Posterior vena cava (tissue), 2 donors: ENCODE measurements at regions of chr3 and their contacts with region 1.

Region 1: DNA sequence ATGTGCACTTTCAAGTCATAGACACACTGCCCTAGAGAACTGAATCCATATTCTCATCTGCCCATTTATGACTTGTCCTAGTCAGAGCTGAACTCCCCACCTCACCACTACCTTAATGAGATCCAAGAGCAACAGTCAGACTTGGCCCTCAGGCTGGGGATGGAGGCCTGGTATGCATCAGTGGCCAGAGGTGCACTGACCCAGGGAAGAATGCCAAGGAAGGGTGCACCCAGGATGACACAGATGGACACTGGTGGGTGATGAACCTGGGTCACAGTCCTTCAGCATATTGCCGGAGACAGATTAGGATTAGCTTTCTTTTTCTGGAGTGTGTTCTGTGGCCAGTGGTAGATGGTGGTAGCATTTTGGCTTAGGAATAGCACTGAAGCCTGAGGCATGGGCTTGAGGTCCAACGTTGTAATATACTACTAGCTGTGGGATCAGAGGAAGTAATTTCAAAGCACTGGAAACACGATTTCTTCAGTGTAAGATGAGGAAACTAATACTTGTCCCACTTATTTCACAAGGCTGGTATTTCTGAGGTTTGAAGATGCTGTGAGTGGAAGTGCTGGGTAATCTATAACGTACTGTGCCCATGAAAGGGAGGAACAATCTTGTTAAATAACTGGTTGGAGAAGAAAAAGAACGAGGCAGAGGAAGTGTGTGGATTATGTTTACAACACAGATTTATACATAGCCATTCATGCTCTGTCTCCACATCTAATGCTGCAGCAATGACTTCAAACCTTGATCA is 265.0 kb downstream of the THRB start:
- DNase-seq: no peak

Region 2: GRCh38 chr3:23981955-23982354 is 247.7 kb before region 1 on chr3:
- intact Hi-C with region 1: loop called in 1 of 2 experiments (anchors 2 kb)
- DNase-seq: no peak

Region 3: DNA sequence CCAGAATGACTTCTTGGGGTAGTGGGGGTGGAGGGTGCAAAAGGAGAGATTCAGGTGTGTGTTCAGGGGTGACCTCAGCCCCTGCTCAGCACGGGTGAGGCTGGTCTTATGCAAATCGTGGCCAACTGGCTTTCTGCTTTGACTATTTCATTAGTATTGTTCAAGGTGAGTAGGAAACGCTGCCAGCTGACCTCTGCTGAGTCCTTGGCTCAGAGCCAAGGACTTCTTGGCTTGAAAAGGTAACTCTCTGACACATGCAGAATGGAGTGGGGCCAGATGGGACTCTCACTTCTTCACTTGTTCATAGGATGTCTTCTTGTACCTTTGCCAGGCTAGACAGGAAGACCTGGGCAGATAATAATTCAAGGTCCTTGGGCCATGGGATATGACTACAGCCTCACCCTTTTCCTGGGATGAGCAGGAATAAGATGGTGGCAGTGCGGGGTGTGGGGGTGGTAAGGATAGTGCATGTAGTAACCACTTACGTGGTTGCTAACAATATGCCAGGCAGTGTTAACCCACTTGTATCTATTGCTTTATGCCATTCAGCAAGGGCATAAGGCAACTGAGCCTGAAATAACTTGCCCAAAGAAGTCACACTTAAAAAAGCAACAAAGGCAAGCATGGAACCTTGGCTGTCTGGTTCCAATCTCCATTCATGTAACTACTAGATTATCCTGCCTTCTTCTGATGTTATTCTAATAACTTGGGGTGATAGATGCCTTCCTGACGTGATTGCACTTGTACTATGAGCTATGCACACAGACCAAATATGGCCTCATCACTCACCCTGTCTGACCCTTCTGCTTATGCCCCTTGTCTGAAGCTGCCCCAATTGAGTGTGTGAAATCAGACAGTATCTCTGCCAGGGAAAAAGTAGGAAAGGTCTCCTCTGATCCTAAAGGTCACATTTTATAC is 91.4 kb before region 1 on chr3:
- intact Hi-C with region 1: no loop called
- DNase-seq: no peak